Dorsolateral prefrontal cortex (tissue), 120 donors: ENCODE measurements at regions of chr3 and their contacts with region 1.

Region 1: GRCh38 chr3:177041021-177041729 is 156.1 kb downstream of the TBL1XR1 start:
- DNase-seq: peak in 2 of 10 donors; percentile 24 to 30
- H3K4me3 ChIP-seq: no peak overlapping the region
- H3K27ac ChIP-seq: peak overlapping the region in 48 of 59 donors; percentile 4 to 66 (median 42)
- H3K27me3 ChIP-seq: no peaks in the 10 kb centered on the region
- CTCF ChIP-seq: no peak

Region 2: GRCh38 chr3:177251755-177252154 is 210.6 kb after region 1 on chr3:
- intact Hi-C with region 1: no loop called
- DNase-seq: no peak
- H3K4me3 ChIP-seq: no peak overlapping the region
- H3K27ac ChIP-seq: no peak overlapping the region
- H3K27me3 ChIP-seq: no peaks in the 10 kb centered on the region
- CTCF ChIP-seq: no peak

Region 3: GRCh38 chr3:177802151-177802900 is 761.2 kb after region 1 on chr3:
- intact Hi-C with region 1: loop called in 1 of 2 experiments (anchors 10 kb)
- DNase-seq: peak in 1 of 10 donors; percentile 38
- H3K4me3 ChIP-seq: no peak overlapping the region
- H3K27ac ChIP-seq: peak overlapping the region in 41 of 59 donors; percentile 0 to 79 (median 44)
- H3K27me3 ChIP-seq: no peaks in the 10 kb centered on the region
- CTCF ChIP-seq: peak in 8 of 56 donors; percentile 8 to 27 (median 18)

Region 4: DNA sequence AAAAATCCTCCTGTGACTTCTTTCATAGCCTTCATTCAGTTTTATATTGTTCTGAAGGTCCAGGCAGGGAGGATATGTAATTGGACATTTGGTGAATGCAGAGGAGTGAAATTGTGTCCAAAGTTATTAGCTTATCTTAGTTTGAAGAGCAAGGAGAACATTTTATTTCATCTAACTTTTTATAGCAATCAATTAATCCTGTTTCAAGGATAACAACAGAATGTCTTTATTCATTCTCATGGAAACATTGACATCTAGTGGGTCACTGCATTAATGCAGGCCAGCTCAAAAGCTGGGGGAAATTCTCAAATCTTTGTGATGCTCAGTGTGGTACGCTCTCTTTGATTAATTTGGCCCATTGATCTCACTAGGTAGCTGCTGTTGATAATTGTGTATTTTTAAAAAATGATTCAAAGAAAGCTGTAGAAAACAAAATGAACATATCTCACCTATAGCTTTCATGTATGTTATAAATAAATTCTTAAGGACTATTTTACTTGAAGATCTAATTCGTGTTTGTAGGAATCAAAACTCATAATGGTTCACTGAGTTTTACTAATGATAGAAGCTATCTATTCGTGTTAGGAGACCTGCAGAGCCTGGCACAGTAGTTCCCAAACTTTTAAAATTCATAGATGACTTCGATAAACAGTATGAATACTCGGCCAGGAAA is 1344.2 kb after region 1 on chr3:
- intact Hi-C with region 1: loop called in 1 of 2 experiments (anchors 10 kb)
- DNase-seq: peak in 3 of 10 donors; percentile 34 to 44 (median 40)
- H3K4me3 ChIP-seq: peak overlapping the region in 11 of 59 donors; percentile 1 to 24 (median 11)
- H3K27ac ChIP-seq: peak overlapping the region in 35 of 59 donors; percentile 0 to 83 (median 48)
- H3K27me3 ChIP-seq: no peaks in the 10 kb centered on the region
- CTCF ChIP-seq: peak; percentile 70 to 96 (median 85)